Testis (tissue), 5 donors: ENCODE measurements at regions of chr5 and their contacts with region 1.

Region 1: DNA sequence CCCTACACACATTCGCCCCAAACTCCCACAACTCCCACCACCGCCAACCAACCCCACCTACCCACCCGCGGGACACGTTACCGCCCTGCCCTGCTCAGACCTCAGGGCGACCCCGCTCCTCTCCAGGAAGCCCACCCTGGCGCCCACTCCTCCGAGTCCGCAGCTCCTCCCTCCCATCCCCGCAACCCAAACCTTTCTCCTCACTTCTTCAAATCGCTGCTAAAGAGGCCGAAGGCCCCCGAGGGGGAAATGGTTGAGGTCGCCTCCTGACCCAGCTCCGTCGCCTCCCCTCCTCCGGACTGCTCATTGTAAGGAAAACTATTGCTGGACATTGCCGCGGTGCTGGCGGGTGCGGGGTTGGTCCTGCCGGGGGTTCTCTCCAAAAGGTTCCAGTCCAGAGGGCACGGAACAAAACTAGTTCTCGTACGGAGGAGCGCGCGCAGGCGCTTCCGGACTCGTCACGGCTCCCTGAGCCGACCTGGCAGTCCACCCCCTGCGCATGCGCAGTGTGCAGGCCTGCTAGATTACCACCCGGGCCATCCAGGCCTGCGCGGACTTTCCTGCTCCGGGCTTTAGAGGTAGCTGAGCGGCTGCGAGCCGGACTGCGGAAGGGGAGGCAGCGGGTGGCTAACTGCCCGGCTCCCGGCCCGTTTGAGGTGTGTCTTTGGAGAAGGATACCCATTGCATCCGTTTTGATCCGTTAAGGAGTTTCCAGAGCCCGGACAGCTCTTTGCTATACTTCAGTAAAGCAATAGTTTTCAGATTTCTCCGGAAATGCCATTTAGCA is at the start of gene AP3B1:
- DNase-seq: peak; percentile 99
- H3K4me3 ChIP-seq: peak within 1 kb of the TSS; percentile 90 to 95
- H3K27ac ChIP-seq: peak within 1 kb of the TSS; percentile 93 to 95
- H3K4me1 ChIP-seq: peaks cover 20% of the 10 kb centered on the region
- H3K27me3 ChIP-seq: no peaks in the 10 kb centered on the region
- CTCF ChIP-seq: no peak
- POLR2A ChIP-seq: peak; percentile 32
- total RNA-seq, gene AP3B1: 74.0 to 77.3 TPM

Region 2: GRCh38 chr5:78137290-78137689 is 157.2 kb before region 1 on chr5:
- intact Hi-C with region 1: no loop called
- DNase-seq: no peak
- H3K4me3 ChIP-seq: no peak overlapping the region
- H3K27ac ChIP-seq: no peak overlapping the region
- H3K4me1 ChIP-seq: no peaks in the 10 kb centered on the region
- H3K27me3 ChIP-seq: no peaks in the 10 kb centered on the region
- CTCF ChIP-seq: no peak
- POLR2A ChIP-seq: no peak

Region 3: DNA sequence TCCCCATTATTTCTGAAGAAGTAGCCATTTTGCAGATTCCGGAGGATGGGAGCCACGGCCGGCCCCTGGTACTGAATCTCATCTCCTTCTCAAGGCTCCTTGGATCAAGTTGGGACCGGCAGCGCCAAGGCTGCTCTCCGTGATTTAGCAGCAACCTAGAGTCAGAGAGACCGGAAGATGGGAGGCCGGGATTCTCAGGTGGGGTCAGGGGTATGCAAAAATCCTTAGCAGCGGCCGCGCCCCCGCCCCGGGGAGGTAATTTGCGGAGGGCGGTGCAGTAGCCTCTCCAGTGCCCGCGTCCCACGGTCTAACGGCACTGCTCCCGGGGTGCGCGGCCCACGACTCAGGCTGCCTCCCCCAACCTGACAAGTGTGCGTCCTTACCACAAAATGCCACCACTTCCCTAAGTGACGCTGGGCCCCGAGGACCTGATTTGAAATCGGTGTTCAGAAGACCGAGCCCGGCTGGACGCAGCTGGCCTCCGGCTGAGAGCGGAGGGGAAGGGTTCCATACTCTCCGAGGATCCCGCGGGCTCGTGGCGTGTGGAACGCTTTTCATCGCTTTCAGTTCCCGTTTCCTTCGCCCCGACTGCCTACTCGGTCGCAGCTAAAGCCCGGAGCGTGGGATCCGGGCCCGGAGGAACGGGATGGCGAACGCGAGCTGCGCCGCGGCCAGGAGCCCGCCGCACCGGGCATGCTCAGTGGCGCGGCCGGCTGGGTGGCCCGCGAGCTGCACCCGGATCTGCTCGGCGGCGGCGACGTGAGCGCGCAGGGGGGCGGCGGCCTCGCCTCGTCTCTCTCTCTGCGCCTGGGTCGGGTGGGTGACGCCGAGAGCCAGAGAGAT is 65.6 kb after region 1 on chr5 and contains the start of gene SCAMP1:
- intact Hi-C with region 1: loop called (anchors 5 kb)
- DNase-seq: peak; percentile 91
- H3K4me3 ChIP-seq: peak within 1 kb of the TSS; percentile 93 to 99
- H3K27ac ChIP-seq: peak within 1 kb of the TSS; percentile 86 to 95
- H3K4me1 ChIP-seq: peaks cover 14% of the 10 kb centered on the region
- H3K27me3 ChIP-seq: no peaks in the 10 kb centered on the region
- CTCF ChIP-seq: peak in 2 of 3 experiments; percentile 37 to 40
- POLR2A ChIP-seq: peak; percentile 19
- total RNA-seq, gene SCAMP1: 28.3 to 35.9 TPM